ENCODE measurements at regions of chr9 and their contacts with region 1.

Region 1: DNA sequence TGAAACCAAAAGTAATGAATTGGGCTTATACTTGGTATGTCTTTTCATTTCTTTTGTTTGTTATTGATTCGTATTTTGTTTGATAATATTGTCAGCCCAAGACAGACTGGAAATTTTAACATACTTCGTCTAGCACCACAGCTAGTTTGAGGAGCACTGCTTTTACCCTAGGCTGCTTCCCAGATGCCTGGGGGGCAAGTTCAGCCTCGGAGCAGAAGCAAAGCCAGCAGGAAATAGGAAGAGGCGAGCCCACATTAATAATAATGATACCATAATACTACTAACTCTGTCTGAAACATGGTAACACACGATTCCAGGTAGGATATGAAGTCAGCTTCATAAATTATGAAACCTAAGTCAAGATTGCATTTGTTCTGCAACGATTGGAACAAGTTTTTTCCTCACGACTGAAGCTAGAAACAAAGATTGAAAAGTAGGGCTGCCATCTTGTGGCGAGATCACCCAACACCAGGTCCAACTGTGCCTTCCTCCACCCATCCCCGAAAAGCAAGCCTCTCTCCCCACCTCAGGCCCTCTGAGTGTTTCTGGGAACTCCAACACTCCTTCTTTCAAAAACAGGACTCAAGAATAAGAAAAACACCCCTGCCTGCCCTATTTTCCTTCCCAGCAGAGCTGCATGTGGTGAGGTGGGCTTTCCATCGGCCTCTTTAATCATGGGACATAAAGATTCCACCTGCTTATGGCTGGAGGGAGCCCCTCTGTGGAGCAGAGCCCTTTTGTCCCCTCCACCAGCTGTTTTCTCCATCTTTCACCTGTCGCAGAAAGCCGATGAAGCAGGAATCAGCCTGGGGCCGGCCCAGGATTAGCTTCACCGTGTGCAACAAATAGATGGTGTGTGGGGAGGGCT is 236.4 kb downstream of the CAAP1 start:
- DNase-seq: no peak
- ATAC-seq: no peak
- H3K4me3 ChIP-seq: no peak overlapping the region
- H3K27ac ChIP-seq: no peak overlapping the region
- H3K4me1 ChIP-seq: no peaks in the 10 kb centered on the region
- H3K27me3 ChIP-seq: no peaks in the 10 kb centered on the region
- CTCF ChIP-seq: peak in 1 of 5 experiments; percentile 28
- POLR2A ChIP-seq: no peak

Region 2: GRCh38 chr9:26561928-26562327 is 94.3 kb before region 1 on chr9:
- in situ Hi-C with region 1: loop called in 1 of 4 experiments (anchors 25 kb)
- intact Hi-C with region 1: no loop called
- DNase-seq: no peak
- ATAC-seq: no peak
- H3K4me3 ChIP-seq: no peak overlapping the region
- H3K27ac ChIP-seq: no peak overlapping the region
- H3K4me1 ChIP-seq: peaks cover 4 to 5% of the 10 kb centered on the region in 2 donors
- H3K27me3 ChIP-seq: no peaks in the 10 kb centered on the region
- CTCF ChIP-seq: no peak
- POLR2A ChIP-seq: no peak

Region 3: DNA sequence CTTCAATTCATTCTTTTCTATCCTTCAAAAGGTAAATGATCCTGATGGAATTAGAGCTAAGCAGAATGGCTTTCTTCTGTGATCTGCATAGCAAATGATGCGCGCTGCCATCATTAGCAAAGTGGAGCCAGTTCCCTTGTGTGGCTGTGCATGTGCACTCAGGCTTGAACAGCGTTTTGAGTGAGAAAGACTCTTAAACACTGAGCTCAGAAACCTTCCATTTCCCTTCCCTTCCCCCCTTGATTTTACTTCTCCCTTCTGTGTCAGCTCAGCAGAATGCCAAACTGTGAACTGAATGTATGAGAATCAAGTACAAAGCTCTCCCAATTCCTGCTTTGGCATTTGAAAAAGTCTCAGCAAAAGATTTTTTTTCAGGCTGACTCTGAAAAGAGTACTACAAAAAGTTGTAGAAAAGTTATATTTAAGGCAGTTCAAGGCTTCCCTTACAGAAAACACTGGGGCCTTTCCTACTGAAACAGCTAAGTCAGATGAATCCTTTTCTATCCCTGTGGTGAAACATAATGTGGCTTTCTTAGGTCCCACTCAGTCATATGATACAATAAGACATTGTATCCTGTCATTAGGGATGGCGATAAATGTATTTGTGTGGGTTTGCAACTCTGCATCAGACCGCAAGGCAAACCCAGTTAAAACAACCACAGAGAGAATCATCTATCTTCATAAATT is 13.6 kb after region 1 on chr9:
- in situ Hi-C with region 1: no loop called
- intact Hi-C with region 1: no loop called
- DNase-seq: no peak
- ATAC-seq: no peak
- H3K4me3 ChIP-seq: no peak overlapping the region
- H3K27ac ChIP-seq: no peak overlapping the region
- H3K4me1 ChIP-seq: no peaks in the 10 kb centered on the region
- H3K27me3 ChIP-seq: no peaks in the 10 kb centered on the region
- CTCF ChIP-seq: no peak
- POLR2A ChIP-seq: no peak

Measured in gastrocnemius medialis (tissue), 4 donors.